ENCODE measurements at regions of chr20 and their contacts with region 1.

Region 1: GRCh38 chr20:3203315-3204123 is 963 bp downstream of the DDRGK1 start:
- DNase-seq: no peak
- H3K4me3 ChIP-seq: peak overlapping the region; percentile 59 to 93
- H3K27ac ChIP-seq: peak overlapping the region; percentile 75
- H3K4me1 ChIP-seq: peaks cover 23% of the 10 kb centered on the region
- H3K27me3 ChIP-seq: no peaks in the 10 kb centered on the region
- CTCF ChIP-seq: no peak
- POLR2A ChIP-seq: no peak

Region 2: DNA sequence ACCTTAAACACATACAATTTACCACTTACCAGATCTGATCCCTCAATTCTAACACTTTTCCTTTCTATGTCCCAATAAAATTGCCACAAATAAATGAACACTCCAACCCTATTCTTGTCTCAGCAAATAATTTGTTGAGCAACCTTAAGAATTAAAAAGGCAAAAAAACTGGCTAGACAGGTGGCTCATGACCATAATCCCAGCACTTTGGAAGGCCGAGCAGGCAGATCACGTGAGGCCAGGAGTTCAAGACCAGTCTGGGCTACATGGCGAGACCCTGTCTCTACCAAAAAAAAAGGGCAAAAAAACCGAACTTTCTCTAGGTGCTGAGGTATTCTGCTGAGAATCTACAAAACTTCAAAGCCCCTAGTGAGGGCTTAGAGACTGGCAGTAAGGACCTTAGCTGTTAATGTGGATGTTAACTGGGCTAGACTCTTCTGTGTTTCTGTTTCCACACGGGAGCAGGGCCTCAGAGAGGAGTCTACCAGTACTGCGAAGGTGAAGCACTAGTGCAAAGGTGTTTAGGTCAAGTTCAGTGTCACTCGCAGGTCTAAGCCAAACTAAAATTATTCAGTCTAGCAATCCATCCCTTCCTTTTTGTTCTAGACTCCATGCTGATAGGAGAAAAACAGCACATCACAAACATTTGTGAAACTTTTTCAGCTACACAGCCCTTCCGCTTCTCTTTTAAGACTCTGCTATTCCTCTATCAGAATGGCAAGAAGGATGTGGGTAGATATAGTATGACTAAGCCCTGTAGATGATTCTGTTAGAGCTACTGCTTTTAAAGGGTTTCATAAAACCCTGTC is 46.5 kb before region 1 on chr20:
- intact Hi-C with region 1: loop called (anchors 1 kb)
- DNase-seq: no peak
- H3K4me3 ChIP-seq: peak overlapping the region in 1 of 2 donors; percentile 100
- H3K27ac ChIP-seq: no peak overlapping the region
- H3K4me1 ChIP-seq: peaks cover 70% of the 10 kb centered on the region
- H3K27me3 ChIP-seq: no peaks in the 10 kb centered on the region
- CTCF ChIP-seq: no peak
- POLR2A ChIP-seq: no peak

Measured in vagina (tissue), 2 donors.